ENCODE measurements at regions of chr9 and their contacts with region 1.

Region 1: DNA sequence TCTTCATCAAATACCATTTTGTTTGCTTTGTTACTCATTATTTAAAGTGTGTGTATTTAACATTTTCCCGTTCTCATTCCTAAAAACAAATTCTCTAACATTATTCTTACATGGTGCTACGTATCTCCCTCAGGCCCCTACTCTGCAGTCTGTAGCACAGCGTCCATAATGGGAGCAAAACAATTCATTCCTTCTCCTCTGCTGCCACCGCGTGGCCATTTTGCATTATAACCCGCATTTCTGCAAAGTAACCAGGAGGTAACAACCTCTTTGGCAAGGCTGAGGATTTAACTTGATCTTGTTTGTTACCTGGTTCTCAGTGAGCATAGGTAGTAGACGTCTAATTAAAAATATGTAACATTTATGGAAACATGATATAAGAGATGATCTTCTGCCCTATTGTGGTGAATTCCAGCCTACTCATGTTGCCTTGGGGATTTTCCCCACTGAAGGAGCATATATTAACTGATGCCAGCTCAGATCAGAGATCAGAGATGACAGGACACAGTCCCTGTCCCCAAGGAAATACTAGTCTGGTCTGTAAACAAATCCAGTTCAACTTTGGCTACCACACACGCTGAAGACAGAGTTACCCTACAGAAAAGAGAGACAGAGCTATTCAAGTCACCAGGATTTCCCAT is 10.5 kb downstream of the OR1K1 start:
- DNase-seq: peak; percentile 78
- H3K4me3 ChIP-seq: no peak overlapping the region; a peak in 1 of 4 replicates
- H3K27ac ChIP-seq: no peak overlapping the region
- H3K4me1 ChIP-seq: peaks cover 0 to under 1% of the 10 kb centered on the region in 2 experiments; a peak in 1 of 4 replicates
- H3K27me3 ChIP-seq: no peaks in the 10 kb centered on the region
- CTCF ChIP-seq: peak; percentile 77
- EP300 ChIP-seq: no peak
- RAD21 ChIP-seq: peak; percentile 97

Region 2: DNA sequence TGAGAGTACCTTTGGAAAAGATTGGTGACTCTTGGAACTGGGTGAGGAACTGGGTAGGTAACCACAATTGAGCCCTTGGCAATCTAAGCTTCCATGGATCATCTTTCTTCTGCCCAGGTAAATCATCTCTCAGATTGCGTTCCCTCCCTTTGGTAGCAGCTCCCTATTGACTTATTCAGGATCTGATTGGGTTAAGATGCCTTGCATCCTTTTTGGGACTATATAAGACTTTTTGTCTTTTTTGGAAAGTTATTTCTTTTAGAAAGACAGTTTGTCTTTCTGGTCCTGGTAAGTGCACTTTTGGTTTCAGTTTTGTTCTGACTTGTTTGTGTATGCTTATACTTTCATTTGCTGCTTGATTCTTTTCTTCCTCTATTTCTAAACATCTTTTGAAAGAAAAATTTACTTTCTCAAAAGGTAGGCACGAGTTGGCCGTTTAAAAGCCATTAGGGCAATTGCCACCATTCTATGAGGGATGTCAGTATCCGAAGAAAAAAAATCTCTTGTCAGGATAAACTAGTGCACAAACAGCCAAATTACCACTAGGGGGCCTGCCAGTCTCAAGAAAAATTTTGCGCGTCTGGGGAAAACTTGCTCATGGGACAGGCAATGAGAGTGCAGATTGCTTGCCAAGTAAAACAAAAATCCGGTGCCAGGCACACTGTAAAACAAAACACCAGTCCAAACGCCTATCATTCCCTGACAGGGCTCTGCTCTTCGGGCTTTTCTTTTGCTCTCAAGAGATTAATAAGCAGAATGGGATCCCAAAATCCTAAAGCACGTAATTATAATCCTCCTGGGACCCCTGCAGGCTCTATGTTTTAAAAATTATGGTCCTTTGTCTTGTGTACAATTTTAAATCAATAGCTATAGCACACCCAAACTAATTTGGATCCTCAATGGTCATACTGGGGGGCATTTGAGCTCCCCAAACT is 345.5 kb before region 1 on chr9:
- CTCF ChIA-PET with region 1: interaction called, 77 read pairs
- POLR2A ChIA-PET with region 1: no interaction called
- DNase-seq: peak; percentile 52
- H3K4me3 ChIP-seq: peak overlapping the region; percentile 47 to 60
- H3K27ac ChIP-seq: peak overlapping the region in 1 of 2 experiments; percentile 7; a peak in 1 of 4 replicates
- H3K4me1 ChIP-seq: peaks cover 3 to 4% of the 10 kb centered on the region in 2 experiments; a peak in 2 of 4 replicates
- H3K27me3 ChIP-seq: no peaks in the 10 kb centered on the region
- CTCF ChIP-seq: peak; percentile 92
- EP300 ChIP-seq: 0 out of 4 replicates have a peak, but pooled peaks of 1 of the 2 experiments have one; percentile 9
- RAD21 ChIP-seq: peak; percentile 85

Region 3: GRCh38 chr9:122498883-122499288 is 311.5 kb before region 1 on chr9:
- CTCF ChIA-PET with region 1: interaction called, 30 read pairs
- POLR2A ChIA-PET with region 1: no interaction called
- DNase-seq: peak; percentile 45
- H3K4me3 ChIP-seq: no peak overlapping the region
- H3K27ac ChIP-seq: no peak overlapping the region
- H3K4me1 ChIP-seq: no peaks in the 10 kb centered on the region; a peak in 1 of 4 replicates
- H3K27me3 ChIP-seq: no peaks in the 10 kb centered on the region
- CTCF ChIP-seq: peak; percentile 78
- EP300 ChIP-seq: no peak
- RAD21 ChIP-seq: peak; percentile 59

Region 4: DNA sequence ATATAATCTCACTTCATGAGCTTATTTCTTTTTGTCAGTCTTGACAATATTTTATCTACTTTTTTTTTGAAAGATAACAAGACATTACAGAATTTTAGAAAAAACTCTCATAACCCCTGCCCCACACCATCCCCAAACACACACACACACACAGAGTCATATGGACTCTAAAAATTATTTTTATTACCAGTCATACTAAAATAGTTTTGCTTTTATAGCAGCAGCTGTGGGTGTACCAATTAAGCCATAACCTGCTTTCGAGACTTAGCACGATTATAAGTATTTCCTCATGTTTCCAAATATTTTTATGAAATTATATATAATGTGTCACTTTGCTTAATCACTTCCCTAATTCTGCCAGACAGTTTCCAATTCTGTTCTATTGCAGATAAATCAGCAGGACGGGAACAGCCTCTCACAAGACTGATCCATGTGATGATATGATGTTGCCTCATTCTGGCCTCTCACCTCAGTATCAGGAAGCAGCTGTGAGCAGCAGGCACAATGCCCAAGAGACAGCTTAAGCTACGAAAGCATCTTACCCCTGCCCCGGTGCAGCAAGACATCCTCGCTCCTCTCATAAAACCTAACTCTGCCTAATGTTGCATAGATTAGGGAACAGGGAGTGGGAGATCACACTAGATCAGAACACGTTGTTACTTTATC is 11.0 kb after region 1 on chr9:
- CTCF ChIA-PET with region 1: interaction called, 25 read pairs
- POLR2A ChIA-PET with region 1: no interaction called
- DNase-seq: no peak
- H3K4me3 ChIP-seq: no peak overlapping the region
- H3K27ac ChIP-seq: no peak overlapping the region; a peak in 1 of 4 replicates
- H3K4me1 ChIP-seq: peaks cover 4 to 17% of the 10 kb centered on the region in 2 experiments; a peak in 3 of 4 replicates
- H3K27me3 ChIP-seq: no peaks in the 10 kb centered on the region
- CTCF ChIP-seq: no peak
- EP300 ChIP-seq: no peak
- RAD21 ChIP-seq: no peak

Region 5: GRCh38 chr9:122827761-122828093 is 17.3 kb after region 1 on chr9:
- CTCF ChIA-PET with region 1: interaction called, 12 read pairs
- POLR2A ChIA-PET with region 1: no interaction called
- DNase-seq: no peak
- H3K4me3 ChIP-seq: peak overlapping the region; percentile 79 to 93
- H3K27ac ChIP-seq: peak overlapping the region; percentile 91 to 94
- H3K4me1 ChIP-seq: peaks cover 8 to 9% of the 10 kb centered on the region in 2 experiments; a peak in 2 of 4 replicates
- H3K27me3 ChIP-seq: no peaks in the 10 kb centered on the region
- CTCF ChIP-seq: no peak; the same call in 1 of the 2 replicates
- EP300 ChIP-seq: no peak
- RAD21 ChIP-seq: no peak

Measured in SK-N-SH (cell line).